Activated CD8-positive, alpha-beta memory T cell treated with anti-CD3 and anti-CD28 coated beads, Interleukin-2, amount 10 ng/mL, durations not matched to agents 7 days and 5 days (primary cell): ENCODE measurements at regions of chr4 and their contacts with region 1.

Region 1: DNA sequence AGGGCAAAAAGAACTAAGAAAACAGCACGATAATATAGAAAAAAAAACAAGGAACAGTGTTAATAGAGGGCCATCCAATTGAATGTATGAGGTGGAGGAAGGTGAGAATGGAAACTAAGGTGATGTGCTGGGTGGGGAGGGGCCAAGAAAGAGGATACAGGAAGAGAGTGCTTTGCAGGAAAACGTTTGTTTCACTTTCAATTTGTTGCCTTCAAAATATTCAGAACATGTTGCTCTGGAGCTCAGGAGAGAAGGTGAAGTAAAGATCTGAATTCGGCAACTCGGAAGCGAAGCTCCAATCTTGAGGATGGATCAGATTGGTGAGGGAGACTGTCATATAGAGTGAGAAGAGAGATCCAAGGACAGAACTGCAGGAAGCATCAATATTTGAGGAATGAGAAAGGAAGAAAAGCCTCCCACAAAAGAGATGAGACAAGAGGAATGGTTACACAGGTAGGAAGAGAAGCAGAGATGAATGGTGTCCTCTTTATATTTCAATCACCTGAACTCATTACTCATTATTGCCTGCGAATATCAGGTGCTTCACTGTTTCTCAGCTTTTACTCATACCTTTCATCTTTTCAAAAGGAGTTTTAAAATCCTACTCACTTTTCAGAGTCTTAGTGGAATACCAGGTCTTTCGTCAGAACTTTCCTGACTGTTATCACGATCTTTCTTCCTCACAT is 14.7 kb upstream of the SEC24D start:
- DNase-seq: peak; percentile 64
- ATAC-seq: peak; percentile 97
- H3K4me3 Mint-ChIP-seq: peak overlapping the region; percentile 92
- H3K27ac Mint-ChIP-seq: peak overlapping the region; percentile 98
- H3K4me1 Mint-ChIP-seq: peaks cover 27% of the 10 kb centered on the region
- H3K27me3 Mint-ChIP-seq: peaks cover 17% of the 10 kb centered on the region

Region 2: DNA sequence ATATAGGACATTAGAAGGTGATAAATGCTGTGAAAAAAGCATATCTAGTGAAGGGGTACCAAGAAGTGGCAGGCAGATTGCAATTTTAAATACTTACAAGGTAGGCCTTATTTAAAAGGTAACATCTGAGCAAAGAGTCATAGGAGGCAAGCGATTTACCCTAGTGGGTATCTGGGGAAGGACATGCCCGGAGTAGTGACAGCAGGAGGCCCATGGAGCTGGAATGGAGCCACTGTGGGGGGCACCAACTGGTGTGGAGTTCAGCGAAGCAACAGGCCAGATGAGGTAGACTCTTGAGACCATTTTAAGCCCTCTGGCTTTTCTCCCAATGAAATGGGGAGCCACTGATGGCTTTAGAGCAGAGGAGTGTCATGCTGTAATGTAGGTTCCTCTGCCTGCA is 52.0 kb before region 1 on chr4:
- CTCF ChIA-PET with region 1: no interaction called
- DNase-seq: no peak
- ATAC-seq: no peak
- H3K4me3 Mint-ChIP-seq: no peak overlapping the region
- H3K27ac Mint-ChIP-seq: no peak overlapping the region
- H3K4me1 Mint-ChIP-seq: no peaks in the 10 kb centered on the region
- H3K27me3 Mint-ChIP-seq: no peaks in the 10 kb centered on the region

Region 3: GRCh38 chr4:118816538-118817177 is 34.0 kb before region 1 on chr4:
- CTCF ChIA-PET with region 1: no interaction called
- DNase-seq: no peak
- ATAC-seq: no peak
- H3K4me3 Mint-ChIP-seq: no peak overlapping the region
- H3K27ac Mint-ChIP-seq: peak overlapping the region; percentile 3
- H3K4me1 Mint-ChIP-seq: peaks cover 2% of the 10 kb centered on the region
- H3K27me3 Mint-ChIP-seq: no peaks in the 10 kb centered on the region

Region 4: GRCh38 chr4:118835571-118836300 is 14.9 kb before region 1 on chr4 and contains the start of gene SEC24D:
- CTCF ChIA-PET with region 1: interaction called, 10 read pairs
- DNase-seq: peak; percentile 89
- ATAC-seq: peak; percentile 90
- H3K4me3 Mint-ChIP-seq: peak within 1 kb of the TSS; percentile 99
- H3K27ac Mint-ChIP-seq: peak within 1 kb of the TSS; percentile 97
- H3K4me1 Mint-ChIP-seq: peaks cover 34% of the 10 kb centered on the region
- H3K27me3 Mint-ChIP-seq: no peaks in the 10 kb centered on the region
- total RNA-seq, gene SEC24D: 40.3 to 40.6 TPM